Prostate gland (tissue), 2 donors: ENCODE measurements at regions of chr19 and their contacts with region 1.

Region 1: GRCh38 chr19:12294249-12295158 is at the start of gene ZNF44:
- DNase-seq: peak; percentile 99
- H3K4me3 ChIP-seq: peak within 1 kb of the TSS; percentile 97 to 99
- H3K27ac ChIP-seq: peak within 1 kb of the TSS; percentile 84 to 94
- H3K4me1 ChIP-seq: no peaks in the 10 kb centered on the region
- H3K27me3 ChIP-seq: no peaks in the 10 kb centered on the region
- CTCF ChIP-seq: no peak
- POLR2A ChIP-seq: peak; percentile 86
- total RNA-seq, gene ZNF44: 10.3 to 16.2 TPM

Region 2: DNA sequence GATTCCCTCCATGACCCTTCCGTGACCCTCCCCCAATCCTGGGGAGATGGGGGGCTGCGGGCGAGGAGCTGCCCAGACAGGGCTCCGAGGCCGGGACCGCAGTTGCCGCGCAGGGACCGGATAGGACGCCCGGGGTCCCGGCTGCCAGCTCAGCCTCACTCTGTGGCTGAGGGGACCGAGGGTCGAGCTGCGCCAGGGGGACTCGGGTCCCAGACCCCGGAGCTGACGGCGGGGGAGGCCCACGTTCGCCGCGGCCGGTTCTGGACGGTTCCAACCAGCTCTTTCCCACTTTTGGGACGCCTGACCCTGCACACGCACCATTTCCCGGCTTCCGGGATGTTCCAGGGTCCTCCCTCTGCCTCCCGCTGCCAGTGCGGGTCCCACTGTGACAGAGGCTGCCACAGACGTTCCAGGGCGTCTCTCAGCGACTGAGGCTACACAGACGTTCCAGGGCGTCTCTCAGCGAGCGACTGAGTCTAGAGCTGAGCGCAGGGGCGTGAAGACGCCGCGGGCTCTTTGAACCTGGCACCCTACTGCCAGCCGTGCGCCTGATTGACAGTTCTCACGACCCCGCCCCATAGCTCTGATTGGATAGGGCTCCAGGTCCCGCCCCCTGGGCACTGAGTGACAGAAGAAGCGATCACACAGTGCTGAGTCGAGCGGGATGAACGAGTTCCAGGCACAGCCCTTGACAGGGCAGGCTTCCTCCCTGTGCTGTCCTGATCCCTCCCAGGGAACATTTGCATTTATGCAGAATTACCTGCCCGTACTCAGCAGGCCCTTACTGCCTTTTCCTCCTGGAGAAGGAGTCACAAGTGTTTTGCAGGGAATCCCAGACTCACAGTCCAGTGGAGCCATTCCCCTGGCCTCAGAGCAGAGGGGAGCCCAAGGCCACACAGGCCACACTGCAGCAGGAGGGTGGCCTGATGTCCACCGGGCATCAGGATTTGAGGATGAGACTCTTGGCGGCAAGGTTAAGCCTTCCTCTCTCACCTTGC is 39.0 kb after region 1 on chr19 and contains the start of gene ZNF563:
- intact Hi-C with region 1: loop called (anchors 1 kb)
- DNase-seq: peak; percentile 98
- H3K4me3 ChIP-seq: peak within 1 kb of the TSS; percentile 88 to 90
- H3K27ac ChIP-seq: peak within 1 kb of the TSS; percentile 94 to 97
- H3K4me1 ChIP-seq: no peaks in the 10 kb centered on the region
- H3K27me3 ChIP-seq: no peaks in the 10 kb centered on the region
- CTCF ChIP-seq: no peak
- POLR2A ChIP-seq: peak; percentile 95
- total RNA-seq, gene ZNF563: 16.7 to 23.6 TPM

Region 3: DNA sequence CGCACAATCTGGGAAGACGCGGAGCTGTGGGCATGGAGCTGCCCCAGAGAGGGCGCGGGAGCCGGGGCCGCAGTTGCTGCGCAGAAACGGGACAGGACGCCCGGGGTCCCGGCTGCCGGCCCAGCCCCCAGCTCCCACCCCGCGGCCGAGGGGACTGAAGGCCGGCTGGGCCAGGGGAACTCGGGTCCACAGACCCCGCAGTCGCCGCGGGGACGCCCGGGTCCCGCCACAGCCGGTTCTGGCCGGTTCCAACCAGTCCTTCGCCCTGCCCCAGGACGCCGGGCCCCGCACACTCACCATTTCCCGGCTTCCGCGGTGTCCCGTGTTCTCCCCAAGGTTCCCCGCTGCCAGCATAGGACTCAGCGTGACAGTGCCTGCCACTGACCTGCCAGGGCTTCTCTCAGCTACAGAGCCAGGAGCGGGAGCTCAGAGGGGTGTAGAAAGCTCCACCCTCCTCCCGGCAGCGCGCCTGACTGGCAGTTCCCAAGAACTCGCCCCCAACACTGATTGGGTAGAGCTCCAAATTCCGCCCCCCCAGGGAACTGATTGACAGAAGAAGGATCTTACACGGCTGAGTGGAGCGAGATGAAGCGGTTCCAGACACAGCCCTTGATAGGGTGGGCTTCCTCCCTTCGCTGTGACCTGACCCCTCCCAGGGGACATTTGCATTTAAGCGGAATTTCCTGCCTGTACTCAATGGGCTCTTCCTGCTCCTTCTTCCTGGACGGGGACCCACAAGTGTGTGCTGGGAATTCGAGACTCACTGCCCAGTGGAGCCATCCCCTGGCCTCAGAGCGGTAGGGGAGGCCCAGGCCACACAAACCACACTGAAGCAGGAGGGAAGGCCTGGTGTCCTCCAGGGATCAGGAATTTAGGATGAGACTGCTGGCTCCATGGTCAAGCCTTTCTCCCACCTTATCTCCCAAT is 71.0 kb after region 1 on chr19 and contains the start of gene ZNF442:
- intact Hi-C with region 1: loop called (anchors 2 kb)
- DNase-seq: peak; percentile 97
- H3K4me3 ChIP-seq: peak within 1 kb of the TSS; percentile 95 to 99
- H3K27ac ChIP-seq: peak within 1 kb of the TSS; percentile 91 to 93
- H3K4me1 ChIP-seq: no peaks in the 10 kb centered on the region
- H3K27me3 ChIP-seq: no peaks in the 10 kb centered on the region
- CTCF ChIP-seq: peak; percentile 30 to 68 (median 54)
- POLR2A ChIP-seq: peak; percentile 94
- total RNA-seq, gene ZNF442: 2.3 to 2.6 TPM

Region 4: DNA sequence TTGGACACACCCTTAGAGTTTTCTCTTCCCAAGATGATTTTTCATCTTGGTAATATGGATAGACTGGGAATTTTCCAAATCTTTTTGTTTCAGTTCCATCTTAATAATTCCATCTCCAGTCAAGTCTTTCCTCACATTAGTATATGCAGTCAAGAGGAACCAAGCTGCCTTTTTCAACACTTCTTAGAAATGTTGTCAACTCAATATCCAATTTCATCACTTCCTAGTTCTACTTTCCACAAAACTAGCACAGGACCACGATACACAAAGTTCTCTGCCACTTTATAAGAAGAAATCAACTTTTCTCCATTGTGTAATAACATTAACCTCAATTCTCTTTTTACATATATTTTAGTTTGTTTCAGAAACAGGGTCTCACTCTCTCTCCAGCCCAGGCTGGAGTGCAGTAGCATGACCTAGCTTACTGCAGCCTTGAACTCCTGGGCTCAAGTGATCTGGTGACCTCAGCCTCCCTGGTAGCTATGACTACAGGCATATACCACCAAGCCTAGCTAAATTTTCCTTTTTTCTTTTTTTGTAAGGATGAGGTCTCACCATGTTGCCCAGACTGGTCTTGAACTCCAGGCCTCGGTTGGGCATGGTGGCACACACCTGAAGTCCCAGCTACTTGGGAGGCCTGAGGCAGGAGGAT is 130.9 kb after region 1 on chr19:
- intact Hi-C with region 1: no loop called
- DNase-seq: no peak
- H3K4me3 ChIP-seq: no peak overlapping the region
- H3K27ac ChIP-seq: no peak overlapping the region
- H3K4me1 ChIP-seq: no peaks in the 10 kb centered on the region
- H3K27me3 ChIP-seq: no peaks in the 10 kb centered on the region
- CTCF ChIP-seq: no peak
- POLR2A ChIP-seq: no peak